ENCODE measurements at regions of chr20 and their contacts with region 1.

Region 1: DNA sequence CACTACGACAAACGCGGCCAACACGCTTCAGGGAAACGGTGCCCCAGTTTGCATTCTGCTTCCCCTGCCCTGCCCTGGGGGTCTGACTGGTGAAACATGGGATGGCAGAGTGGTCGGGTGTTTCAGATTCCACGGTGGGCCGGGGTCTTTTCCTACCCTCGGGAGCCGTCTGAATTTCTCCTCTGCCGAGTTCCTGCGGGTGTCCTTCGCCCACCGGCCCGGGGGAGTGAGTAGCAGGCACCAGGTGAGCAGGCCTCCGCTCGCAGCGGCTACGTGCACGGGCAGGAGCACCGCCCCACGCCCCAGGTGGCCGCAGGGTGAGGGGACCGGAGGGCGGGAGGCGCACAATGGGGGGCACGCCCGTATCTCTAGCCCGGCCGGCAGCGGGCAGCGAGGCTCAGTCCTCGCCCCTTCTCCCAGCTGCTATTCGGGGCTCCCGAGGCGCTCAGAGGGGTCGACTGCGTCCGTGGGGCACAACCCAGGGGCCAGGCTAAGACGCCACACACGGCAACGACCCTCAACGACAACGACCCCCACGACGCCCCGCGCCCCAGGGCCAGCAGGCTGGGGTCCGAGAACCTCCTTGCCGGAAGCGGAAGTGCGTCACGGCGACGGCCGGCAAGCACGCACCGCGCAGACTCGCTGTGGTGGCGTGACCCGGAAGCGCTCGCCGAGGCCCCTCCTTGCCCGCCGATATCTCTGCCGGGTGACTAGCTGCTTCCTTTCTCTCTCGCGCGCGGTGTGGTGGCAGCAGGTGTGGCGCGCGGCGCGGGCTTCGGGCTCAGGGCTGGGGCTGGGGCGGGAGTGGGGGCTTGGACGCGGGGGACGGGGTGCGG is at the start of gene RPS21:
- DNase-seq: peak; percentile 98
- H3K4me3 ChIP-seq: peak within 1 kb of the TSS; percentile 68
- H3K4me3 Mint-ChIP-seq: peak within 1 kb of the TSS; percentile 99
- H3K27ac Mint-ChIP-seq: peak within 1 kb of the TSS; percentile 95
- H3K4me1 ChIP-seq: peaks cover 19% of the 10 kb centered on the region
- H3K4me1 Mint-ChIP-seq: peaks cover 40% of the 10 kb centered on the region
- H3K27me3 ChIP-seq: no peaks in the 10 kb centered on the region
- H3K27me3 Mint-ChIP-seq: no peaks in the 10 kb centered on the region
- CTCF ChIP-seq: no peak
- total RNA-seq, gene RPS21: 4,496 and 4,723 TPM in 2 replicates

Region 2: DNA sequence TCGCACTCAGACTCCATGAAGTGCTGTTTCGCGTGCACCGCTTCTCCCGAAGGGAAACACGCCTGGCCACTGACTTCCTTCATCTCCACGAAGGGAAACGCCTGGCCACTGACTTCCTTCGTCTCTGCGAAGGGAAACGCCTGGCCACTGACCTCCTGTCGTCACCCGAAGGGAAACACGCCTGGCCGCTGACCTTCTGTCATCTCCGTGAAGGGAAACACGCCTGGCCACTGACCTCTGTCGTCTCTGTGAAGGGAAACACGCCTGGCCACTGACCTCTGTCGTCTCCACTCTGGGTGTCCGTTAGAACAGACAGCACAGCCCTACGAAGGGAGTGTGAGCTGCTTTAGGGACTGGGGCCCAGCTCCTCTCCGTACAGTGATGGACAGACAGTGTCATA is 100.9 kb before region 1 on chr20:
- CTCF ChIA-PET with region 1: no interaction called
- POLR2A ChIA-PET with region 1: no interaction called
- intact Hi-C with region 1: no loop called
- DNase-seq: no peak
- H3K4me3 ChIP-seq: no peak overlapping the region
- H3K4me3 Mint-ChIP-seq: no peak overlapping the region
- H3K27ac Mint-ChIP-seq: no peak overlapping the region
- H3K4me1 ChIP-seq: no peaks in the 10 kb centered on the region
- H3K4me1 Mint-ChIP-seq: no peaks in the 10 kb centered on the region
- H3K27me3 ChIP-seq: no peaks in the 10 kb centered on the region
- H3K27me3 Mint-ChIP-seq: no peaks in the 10 kb centered on the region
- CTCF ChIP-seq: no peak

Region 3: GRCh38 chr20:62339647-62340070 is 46.9 kb before region 1 on chr20:
- CTCF ChIA-PET with region 1: interaction called, 10 read pairs
- POLR2A ChIA-PET with region 1: no interaction called
- intact Hi-C with region 1: loop called (anchors 5 kb)
- DNase-seq: no peak
- H3K4me3 ChIP-seq: no peak overlapping the region
- H3K4me3 Mint-ChIP-seq: no peak overlapping the region
- H3K27ac Mint-ChIP-seq: peak overlapping the region; percentile 40
- H3K4me1 ChIP-seq: no peaks in the 10 kb centered on the region
- H3K4me1 Mint-ChIP-seq: peaks cover 6% of the 10 kb centered on the region
- H3K27me3 ChIP-seq: no peaks in the 10 kb centered on the region
- H3K27me3 Mint-ChIP-seq: no peaks in the 10 kb centered on the region
- CTCF ChIP-seq: no peak

Region 4: DNA sequence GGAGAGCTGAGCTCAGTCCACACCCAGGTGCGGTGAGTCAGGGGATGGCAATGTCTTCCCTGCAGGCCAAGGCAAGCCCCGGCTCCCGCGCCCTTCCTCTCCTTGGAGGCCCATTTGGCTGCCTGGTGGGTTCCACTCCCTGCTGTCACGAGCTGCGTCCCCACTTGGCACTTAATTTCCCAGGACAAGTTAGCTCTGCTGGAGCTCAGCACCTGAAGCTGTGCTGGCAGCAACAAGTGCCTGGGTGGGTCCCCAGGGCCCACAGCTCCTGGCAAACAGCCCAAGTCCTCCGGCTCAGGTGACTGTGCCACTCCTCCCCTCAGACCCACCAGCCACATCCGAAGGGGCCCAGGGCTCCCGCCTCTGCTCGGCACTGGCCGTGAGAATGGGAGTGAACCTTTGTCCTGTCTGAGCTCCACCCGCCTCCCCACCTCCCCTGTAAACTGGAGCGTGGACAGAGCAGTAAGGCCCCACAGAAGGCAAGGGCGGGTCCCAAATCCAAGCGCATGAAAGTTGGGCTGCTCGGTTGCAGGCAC is 36.4 kb before region 1 on chr20:
- CTCF ChIA-PET with region 1: interaction called, 14 read pairs
- POLR2A ChIA-PET with region 1: interaction called, 3 read pairs
- intact Hi-C with region 1: no loop called
- DNase-seq: peak; percentile 87 to 94
- H3K4me3 ChIP-seq: no peak overlapping the region
- H3K4me3 Mint-ChIP-seq: peak overlapping the region; percentile 23
- H3K27ac Mint-ChIP-seq: peak overlapping the region; percentile 92
- H3K4me1 ChIP-seq: peaks cover 35% of the 10 kb centered on the region
- H3K4me1 Mint-ChIP-seq: peaks cover 7% of the 10 kb centered on the region
- H3K27me3 ChIP-seq: no peaks in the 10 kb centered on the region
- H3K27me3 Mint-ChIP-seq: no peaks in the 10 kb centered on the region
- CTCF ChIP-seq: no peak

Region 5: GRCh38 chr20:62362981-62363919 is 23.4 kb before region 1 on chr20:
- CTCF ChIA-PET with region 1: interaction called, 188 read pairs
- POLR2A ChIA-PET with region 1: interaction called, 43 read pairs
- intact Hi-C with region 1: loop called (anchors 1 kb)
- DNase-seq: peak in 1 of 2 experiments; percentile 55
- H3K4me3 ChIP-seq: no peak overlapping the region
- H3K4me3 Mint-ChIP-seq: peak overlapping the region; percentile 70
- H3K27ac Mint-ChIP-seq: peak overlapping the region; percentile 94
- H3K4me1 ChIP-seq: peaks cover 78% of the 10 kb centered on the region
- H3K4me1 Mint-ChIP-seq: peaks cover 46% of the 10 kb centered on the region
- H3K27me3 ChIP-seq: no peaks in the 10 kb centered on the region
- H3K27me3 Mint-ChIP-seq: no peaks in the 10 kb centered on the region
- CTCF ChIP-seq: no peak

Region 6: DNA sequence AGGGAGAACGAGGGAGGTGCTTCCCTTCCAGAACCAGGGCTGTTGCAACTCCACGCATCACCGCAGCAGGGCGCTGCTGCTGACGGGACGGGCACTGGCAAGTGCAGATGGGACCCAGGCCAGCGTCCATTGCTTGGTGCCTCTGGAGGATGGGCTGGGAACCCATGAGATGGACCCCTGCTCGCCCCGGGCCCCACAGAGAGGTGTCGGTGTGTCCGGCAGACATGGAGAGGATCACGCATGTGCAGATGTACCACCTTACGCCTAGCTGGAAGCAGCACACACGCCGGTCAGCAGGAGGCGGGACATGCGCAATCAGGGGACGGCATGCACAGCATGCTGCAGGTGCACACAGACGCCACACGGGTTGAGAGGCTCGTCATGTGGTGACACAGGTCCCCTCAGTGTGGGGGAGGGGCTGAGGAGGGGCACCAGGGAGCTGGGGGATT is 14.8 kb after region 1 on chr20:
- CTCF ChIA-PET with region 1: interaction called, 11 read pairs
- POLR2A ChIA-PET with region 1: interaction called, 4 read pairs
- intact Hi-C with region 1: loop called (anchors 1 kb)
- DNase-seq: no peak
- H3K4me3 ChIP-seq: no peak overlapping the region
- H3K4me3 Mint-ChIP-seq: no peak overlapping the region
- H3K27ac Mint-ChIP-seq: no peak overlapping the region
- H3K4me1 ChIP-seq: peaks cover 15% of the 10 kb centered on the region
- H3K4me1 Mint-ChIP-seq: peaks cover 14% of the 10 kb centered on the region
- H3K27me3 ChIP-seq: no peaks in the 10 kb centered on the region
- H3K27me3 Mint-ChIP-seq: no peaks in the 10 kb centered on the region
- CTCF ChIP-seq: no peak

Region 7: GRCh38 chr20:63344616-63345327 is 958.2 kb after region 1 on chr20:
- CTCF ChIA-PET with region 1: no interaction called
- POLR2A ChIA-PET with region 1: no interaction called
- intact Hi-C with region 1: no loop called
- DNase-seq: no peak
- H3K4me3 ChIP-seq: no peak overlapping the region
- H3K4me3 Mint-ChIP-seq: no peak overlapping the region
- H3K27ac Mint-ChIP-seq: no peak overlapping the region
- H3K4me1 ChIP-seq: peaks cover 10% of the 10 kb centered on the region; the same call in 1 of the 2 replicates
- H3K4me1 Mint-ChIP-seq: no peaks in the 10 kb centered on the region
- H3K27me3 ChIP-seq: 0 out of 2 replicates have a peak, but pooled peaks cover 2% of the 10 kb centered on the region
- H3K27me3 Mint-ChIP-seq: peaks cover 21% of the 10 kb centered on the region
- CTCF ChIP-seq: no peak

Measured in Caco-2 (cell line).